MCF 10A (cell line): ENCODE measurements at regions of chr15 and their contacts with region 1.

Region 1: DNA sequence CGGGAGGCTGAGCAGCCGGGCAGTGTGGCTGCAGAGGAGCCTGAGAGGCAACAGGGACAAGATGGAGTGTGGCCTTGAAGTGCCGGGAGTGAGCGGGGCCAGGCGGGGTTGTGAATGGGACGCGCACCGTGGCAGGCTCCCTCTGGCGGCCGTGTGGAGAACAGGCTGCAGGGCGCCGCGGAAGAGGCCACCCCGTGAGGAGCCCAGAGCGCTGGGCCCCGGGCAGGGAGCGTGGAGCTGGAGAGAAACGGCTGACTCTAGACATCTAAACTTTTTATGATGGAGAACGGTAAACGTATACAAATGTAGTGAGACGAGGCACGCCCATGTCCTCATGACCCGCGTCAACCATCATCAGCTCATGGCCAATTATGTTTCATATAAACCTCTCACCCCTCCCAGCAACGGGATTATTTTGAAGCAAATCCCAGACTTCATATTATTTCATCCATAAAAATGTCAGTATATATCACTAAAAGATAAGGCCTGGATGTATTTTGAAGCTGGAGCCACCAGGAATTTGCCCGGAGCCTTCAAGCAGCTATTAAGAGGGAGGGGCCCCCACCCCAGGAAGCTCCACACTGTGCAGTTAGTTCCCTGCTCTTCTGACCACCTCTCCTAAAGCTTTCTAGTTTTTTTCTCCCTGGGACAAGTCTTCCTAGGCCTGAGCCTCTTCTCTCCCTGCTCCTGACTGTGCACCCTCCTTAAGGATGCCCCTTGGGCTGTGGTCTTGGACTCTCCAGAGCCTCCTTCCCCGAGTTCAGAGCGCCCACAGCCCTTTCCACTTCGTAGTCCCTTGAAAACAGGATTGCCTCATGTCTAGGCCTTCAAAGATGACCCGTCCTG is 149.4 kb downstream of the SMAD6 start:
- DNase-seq: peak; percentile 72
- H3K4me3 Mint-ChIP-seq: no peak overlapping the region
- H3K27ac Mint-ChIP-seq: no peak overlapping the region
- H3K4me1 Mint-ChIP-seq: peaks cover 8% of the 10 kb centered on the region
- H3K27me3 Mint-ChIP-seq: no peaks in the 10 kb centered on the region
- CTCF ChIP-seq: peak; percentile 93

Region 2: DNA sequence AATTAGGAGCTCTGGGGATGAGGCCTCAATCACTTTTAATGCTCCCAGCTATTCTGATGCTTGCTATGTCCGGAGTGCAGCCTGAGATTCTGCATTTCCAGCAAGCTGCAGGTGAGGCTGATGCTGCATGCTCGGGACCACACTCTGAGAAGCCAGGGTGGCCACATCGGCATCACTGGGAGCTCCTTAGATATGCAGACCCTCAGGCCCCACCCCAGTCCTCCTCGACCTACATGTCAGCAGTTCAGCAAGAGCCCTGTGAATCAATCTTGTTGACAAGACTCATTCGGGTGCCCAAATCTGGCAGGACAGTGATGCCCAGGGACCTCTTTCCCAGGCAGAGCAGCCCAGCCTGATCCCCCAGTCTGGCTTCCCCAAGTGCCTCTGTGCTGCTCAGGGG is 241.6 kb before region 1 on chr15:
- CTCF ChIA-PET with region 1: interaction called, 16 read pairs
- POLR2A ChIA-PET with region 1: interaction called, 3 read pairs
- intact Hi-C with region 1: no loop called
- DNase-seq: no peak
- H3K4me3 Mint-ChIP-seq: no peak overlapping the region
- H3K27ac Mint-ChIP-seq: no peak overlapping the region
- H3K4me1 Mint-ChIP-seq: no peaks in the 10 kb centered on the region
- H3K27me3 Mint-ChIP-seq: no peaks in the 10 kb centered on the region
- CTCF ChIP-seq: no peak

Region 3: DNA sequence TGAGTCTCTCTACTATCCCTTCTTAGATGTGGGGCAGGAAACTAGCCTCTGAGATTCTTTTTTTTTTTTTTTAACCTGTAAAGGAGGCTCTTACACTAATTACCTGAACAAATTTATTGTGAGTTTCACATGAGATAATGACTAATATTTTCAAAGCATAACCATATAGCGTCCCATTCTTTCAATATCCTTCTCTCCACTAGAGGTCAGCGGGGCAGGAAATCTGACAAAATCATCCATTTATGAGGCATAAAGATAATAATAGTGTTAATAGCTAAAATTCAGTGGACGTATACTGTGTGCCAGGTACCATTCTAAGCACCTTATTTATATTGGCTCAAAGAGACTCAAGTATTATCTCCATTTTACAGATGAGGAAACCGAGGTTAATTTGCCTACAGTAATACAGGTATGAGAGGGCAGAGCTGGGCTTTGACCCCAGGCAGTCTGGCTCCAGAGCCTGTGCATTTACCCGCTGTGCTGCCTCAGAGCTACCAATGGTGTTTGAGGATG is 165.8 kb before region 1 on chr15:
- CTCF ChIA-PET with region 1: interaction called, 26 read pairs
- POLR2A ChIA-PET with region 1: no interaction called
- intact Hi-C with region 1: loop called (anchors 5 kb)
- DNase-seq: no peak
- H3K4me3 Mint-ChIP-seq: no peak overlapping the region
- H3K27ac Mint-ChIP-seq: no peak overlapping the region
- H3K4me1 Mint-ChIP-seq: no peaks in the 10 kb centered on the region
- H3K27me3 Mint-ChIP-seq: no peaks in the 10 kb centered on the region
- CTCF ChIP-seq: peak; percentile 38

Region 4: GRCh38 chr15:66774001-66774814 is 77.2 kb before region 1 on chr15:
- CTCF ChIA-PET with region 1: interaction called, 97 read pairs
- POLR2A ChIA-PET with region 1: no interaction called
- intact Hi-C with region 1: loop called (anchors 1 kb)
- DNase-seq: peak; percentile 80
- H3K4me3 Mint-ChIP-seq: no peak overlapping the region
- H3K27ac Mint-ChIP-seq: no peak overlapping the region
- H3K4me1 Mint-ChIP-seq: no peaks in the 10 kb centered on the region
- H3K27me3 Mint-ChIP-seq: no peaks in the 10 kb centered on the region
- CTCF ChIP-seq: peak; percentile 94

Region 5: DNA sequence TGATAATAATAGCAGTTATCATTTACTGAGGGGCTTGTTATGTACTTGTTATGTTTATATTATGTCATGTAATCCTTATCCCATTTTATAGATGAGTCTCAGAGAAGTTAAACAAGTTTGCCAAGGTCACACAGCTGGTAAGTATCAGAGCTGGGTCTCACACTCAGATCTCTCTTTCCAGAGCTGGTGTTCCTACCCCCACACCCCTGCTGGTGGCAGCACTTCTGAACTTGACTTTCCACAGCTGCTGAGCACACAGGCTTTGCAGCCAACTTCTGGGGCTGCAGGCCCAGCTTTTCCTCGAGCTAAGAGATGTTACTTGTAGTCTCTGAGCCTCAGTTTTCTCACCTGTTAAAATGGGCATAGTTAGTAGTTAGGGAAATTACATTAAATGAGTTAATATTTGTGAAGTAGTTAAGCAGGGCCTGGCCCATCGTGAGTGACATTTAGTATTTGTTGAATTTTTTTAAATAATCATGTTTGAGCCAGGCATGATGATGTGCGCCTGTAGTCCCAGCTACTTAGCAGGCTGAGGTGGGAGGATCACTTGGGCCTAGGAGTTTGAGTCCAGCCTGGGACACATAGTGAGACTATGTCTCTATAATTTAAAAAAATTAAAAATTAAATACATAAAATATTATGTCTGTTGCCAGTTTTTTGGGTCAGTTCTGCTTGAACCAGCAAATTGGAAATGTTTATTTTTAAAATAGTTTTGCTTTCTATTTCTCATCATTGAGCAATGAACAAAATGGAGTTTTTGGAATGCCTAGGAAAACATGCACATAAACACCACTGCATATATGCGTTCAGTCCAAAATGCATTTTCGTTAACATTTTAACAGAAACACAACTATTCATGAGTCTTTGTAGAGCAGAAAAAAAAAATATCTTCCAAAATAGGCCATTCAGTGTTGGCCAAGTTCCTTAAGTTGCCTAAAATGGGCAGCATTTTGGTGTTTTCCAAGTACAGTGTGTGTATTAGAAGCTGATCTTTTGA is 62.1 kb before region 1 on chr15:
- CTCF ChIA-PET with region 1: interaction called, 48 read pairs
- POLR2A ChIA-PET with region 1: interaction called, 6 read pairs
- intact Hi-C with region 1: loop called (anchors 1 kb)
- DNase-seq: peak; percentile 45
- H3K4me3 Mint-ChIP-seq: no peak overlapping the region
- H3K27ac Mint-ChIP-seq: no peak overlapping the region
- H3K4me1 Mint-ChIP-seq: no peaks in the 10 kb centered on the region
- H3K27me3 Mint-ChIP-seq: no peaks in the 10 kb centered on the region
- CTCF ChIP-seq: peak; percentile 44

Region 6: DNA sequence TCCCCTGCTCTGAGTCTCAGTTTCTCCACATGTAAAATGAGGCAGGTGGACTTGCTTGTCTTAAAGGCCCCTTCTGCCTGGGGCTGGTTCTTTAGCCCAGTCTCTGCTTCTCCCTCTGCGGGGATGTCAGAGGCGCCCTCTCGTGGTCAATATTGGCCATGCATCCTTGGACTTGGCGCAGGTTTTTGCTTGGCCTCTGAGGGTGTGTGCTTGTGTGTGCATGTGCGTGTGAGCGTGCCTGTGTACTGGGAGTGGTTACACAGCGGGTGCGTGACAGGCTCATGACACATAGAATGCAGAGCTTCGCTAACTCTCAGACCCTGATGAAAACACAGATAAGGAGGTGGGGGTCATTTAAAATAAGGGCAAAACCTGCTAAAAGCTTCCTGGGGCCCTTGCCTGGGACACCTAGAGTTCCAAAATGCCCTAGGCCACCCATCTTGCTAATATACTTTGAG is 11.5 kb after region 1 on chr15:
- CTCF ChIA-PET with region 1: interaction called, 35 read pairs
- POLR2A ChIA-PET with region 1: no interaction called
- intact Hi-C with region 1: no loop called
- DNase-seq: peak; percentile 84
- H3K4me3 Mint-ChIP-seq: no peak overlapping the region
- H3K27ac Mint-ChIP-seq: no peak overlapping the region
- H3K4me1 Mint-ChIP-seq: peaks cover 20% of the 10 kb centered on the region
- H3K27me3 Mint-ChIP-seq: no peaks in the 10 kb centered on the region
- CTCF ChIP-seq: peak; percentile 86

Region 7: GRCh38 chr15:66883322-66883911 is 32.0 kb after region 1 on chr15:
- CTCF ChIA-PET with region 1: no interaction called
- POLR2A ChIA-PET with region 1: no interaction called
- intact Hi-C with region 1: no loop called
- DNase-seq: peak; percentile 99
- H3K4me3 Mint-ChIP-seq: peak overlapping the region; percentile 41
- H3K27ac Mint-ChIP-seq: peak overlapping the region; percentile 75
- H3K4me1 Mint-ChIP-seq: peaks cover 36% of the 10 kb centered on the region
- H3K27me3 Mint-ChIP-seq: no peaks in the 10 kb centered on the region
- CTCF ChIP-seq: no peak